T-cell (primary cell): ENCODE measurements at regions of chr18 and their contacts with region 1.

Region 1: DNA sequence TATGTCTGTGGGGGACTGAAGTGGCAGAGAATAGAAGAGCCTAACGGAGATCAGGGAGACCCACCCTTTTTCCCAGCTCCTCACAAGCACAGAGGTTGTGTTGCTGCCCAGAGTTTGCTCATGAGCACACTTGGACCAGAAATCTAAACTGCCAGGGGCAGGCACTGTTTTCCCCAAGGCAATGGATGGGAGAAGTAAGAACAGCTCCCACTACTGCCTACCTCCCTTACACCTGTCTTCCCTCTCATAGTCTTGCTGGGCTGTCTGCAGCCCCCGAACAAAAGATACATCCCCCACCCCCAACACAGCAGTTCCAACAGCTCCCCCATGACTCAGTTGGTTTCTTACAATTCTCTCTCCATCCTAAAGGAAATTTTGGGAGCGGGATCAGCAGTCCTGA is 48.1 kb upstream of the CD226 start:
- DNase-seq: no peak
- ATAC-seq: no peak
- H3K4me3 ChIP-seq: no peak overlapping the region
- H3K4me3 Mint-ChIP-seq: no peak overlapping the region
- H3K27ac ChIP-seq: no peak overlapping the region
- H3K27ac Mint-ChIP-seq: no peak overlapping the region
- H3K4me1 ChIP-seq: no peaks in the 10 kb centered on the region
- H3K4me1 Mint-ChIP-seq: peaks cover 0 to 12% (median 4%) of the 10 kb centered on the region in 3 donors
- H3K27me3 ChIP-seq: no peaks in the 10 kb centered on the region
- H3K27me3 Mint-ChIP-seq: no peaks in the 10 kb centered on the region

Region 2: DNA sequence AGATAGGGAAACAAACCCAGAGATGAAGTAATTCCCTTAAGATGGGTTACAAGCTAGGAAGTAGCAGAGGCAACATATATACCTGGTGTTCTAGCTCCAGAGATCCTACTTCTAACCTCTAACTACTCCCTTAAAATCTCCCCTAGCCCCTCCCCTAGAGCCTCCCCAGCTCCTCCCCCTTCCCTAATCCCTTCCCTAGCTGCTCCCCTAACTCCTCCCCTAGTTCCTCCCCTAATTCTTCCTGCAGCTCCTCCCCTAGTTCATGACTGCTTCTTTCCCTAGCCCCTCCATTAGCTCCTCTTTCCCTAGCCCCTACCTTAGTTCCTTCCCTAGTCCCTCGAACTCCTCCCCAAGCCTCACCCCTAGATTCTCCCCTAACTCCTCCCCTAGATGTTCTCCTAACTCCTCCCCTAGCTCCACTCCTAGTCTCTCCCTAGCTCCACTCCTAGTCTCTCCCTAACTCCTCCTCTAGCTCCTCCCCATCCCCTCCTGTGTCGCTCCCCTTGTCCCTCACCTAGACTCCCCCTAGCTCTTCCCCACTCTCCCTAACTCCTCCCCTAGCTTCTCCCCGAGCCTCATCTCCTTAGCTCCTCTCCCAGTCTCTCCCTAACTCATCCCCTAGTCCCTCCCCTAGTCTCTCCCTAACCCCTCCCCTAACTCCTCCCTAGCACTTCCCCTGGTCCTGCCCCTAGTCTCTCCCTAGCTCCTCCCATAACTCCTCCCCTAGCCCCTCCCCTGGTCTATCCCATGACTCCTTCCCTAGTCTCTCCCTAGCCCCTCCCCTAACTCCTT is 157.0 kb before region 1 on chr18:
- CTCF ChIA-PET with region 1: no interaction called
- POLR2A ChIA-PET with region 1: interaction called in 1 of 2 experiments, 12 read pairs
- DNase-seq: no peak
- ATAC-seq: no peak
- H3K4me3 ChIP-seq: no peak overlapping the region
- H3K4me3 Mint-ChIP-seq: no peak overlapping the region
- H3K27ac ChIP-seq: no peak overlapping the region
- H3K27ac Mint-ChIP-seq: no peak overlapping the region
- H3K4me1 ChIP-seq: no peaks in the 10 kb centered on the region
- H3K4me1 Mint-ChIP-seq: no peaks in the 10 kb centered on the region
- H3K27me3 ChIP-seq: no peaks in the 10 kb centered on the region
- H3K27me3 Mint-ChIP-seq: no peaks in the 10 kb centered on the region